ENCODE measurements at regions of chr5 and their contacts with region 1.

Region 1: DNA sequence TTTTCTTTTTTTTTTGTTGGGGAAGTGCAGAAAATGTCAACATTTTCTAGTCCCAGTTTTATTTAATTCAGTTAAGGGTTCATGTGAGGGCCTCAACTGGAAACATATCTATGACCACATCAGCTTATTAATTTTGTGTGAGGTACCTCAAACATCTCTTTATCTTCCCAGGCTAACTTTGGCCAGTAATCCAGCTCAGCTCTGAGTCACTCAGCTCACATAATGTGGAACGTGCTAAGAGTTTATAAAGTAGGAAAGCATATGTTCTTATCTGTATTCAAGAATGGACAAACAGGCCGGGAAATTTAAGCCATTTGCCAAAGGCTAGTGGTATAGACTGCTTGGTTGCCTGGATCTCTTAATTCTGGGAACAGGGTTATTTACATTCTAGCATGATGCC is 118.4 kb downstream of the INSYN2B start:
- DNase-seq: no peak
- H3K4me3 ChIP-seq: no peak overlapping the region
- H3K27ac ChIP-seq: no peak overlapping the region
- H3K4me1 ChIP-seq: no peaks in the 10 kb centered on the region
- H3K27me3 ChIP-seq: no peaks in the 10 kb centered on the region
- CTCF ChIP-seq: no peak
- EP300 ChIP-seq: no peak
- POLR2A ChIP-seq: no peak
- RAD21 ChIP-seq: no peak

Region 2: DNA sequence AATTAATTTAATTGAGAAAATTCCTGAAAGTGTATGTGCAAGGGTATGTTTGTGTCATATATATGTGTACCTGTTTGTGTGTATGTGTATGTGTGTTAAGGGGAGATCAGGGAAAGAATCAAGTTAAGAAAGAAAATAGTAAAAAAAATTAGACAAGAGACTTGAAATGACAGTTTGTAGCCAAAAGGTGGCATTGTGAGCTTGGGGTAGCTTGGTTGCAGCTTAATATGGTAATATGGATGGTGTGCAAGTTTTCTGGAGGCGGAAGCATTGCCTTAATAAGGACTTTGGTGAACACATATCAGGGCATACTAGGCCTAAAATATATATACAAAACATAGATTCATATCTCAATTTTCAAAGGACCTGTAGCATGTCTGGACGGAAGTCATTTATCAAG is 11.5 kb before region 1 on chr5:
- CTCF ChIA-PET with region 1: interaction called, 21 read pairs
- POLR2A ChIA-PET with region 1: no interaction called
- DNase-seq: no peak
- H3K4me3 ChIP-seq: no peak overlapping the region
- H3K27ac ChIP-seq: no peak overlapping the region
- H3K4me1 ChIP-seq: no peaks in the 10 kb centered on the region
- H3K27me3 ChIP-seq: no peaks in the 10 kb centered on the region
- CTCF ChIP-seq: peak in 2 of 3 experiments; percentile 36 to 38; a peak in 3 of 4 replicates
- EP300 ChIP-seq: no peak
- POLR2A ChIP-seq: no peak
- RAD21 ChIP-seq: peak; percentile 58

Measured in H1 (cell line).